Natural killer cell (primary cell): ENCODE measurements at regions of chr7 and their contacts with region 1.

Region 1: DNA sequence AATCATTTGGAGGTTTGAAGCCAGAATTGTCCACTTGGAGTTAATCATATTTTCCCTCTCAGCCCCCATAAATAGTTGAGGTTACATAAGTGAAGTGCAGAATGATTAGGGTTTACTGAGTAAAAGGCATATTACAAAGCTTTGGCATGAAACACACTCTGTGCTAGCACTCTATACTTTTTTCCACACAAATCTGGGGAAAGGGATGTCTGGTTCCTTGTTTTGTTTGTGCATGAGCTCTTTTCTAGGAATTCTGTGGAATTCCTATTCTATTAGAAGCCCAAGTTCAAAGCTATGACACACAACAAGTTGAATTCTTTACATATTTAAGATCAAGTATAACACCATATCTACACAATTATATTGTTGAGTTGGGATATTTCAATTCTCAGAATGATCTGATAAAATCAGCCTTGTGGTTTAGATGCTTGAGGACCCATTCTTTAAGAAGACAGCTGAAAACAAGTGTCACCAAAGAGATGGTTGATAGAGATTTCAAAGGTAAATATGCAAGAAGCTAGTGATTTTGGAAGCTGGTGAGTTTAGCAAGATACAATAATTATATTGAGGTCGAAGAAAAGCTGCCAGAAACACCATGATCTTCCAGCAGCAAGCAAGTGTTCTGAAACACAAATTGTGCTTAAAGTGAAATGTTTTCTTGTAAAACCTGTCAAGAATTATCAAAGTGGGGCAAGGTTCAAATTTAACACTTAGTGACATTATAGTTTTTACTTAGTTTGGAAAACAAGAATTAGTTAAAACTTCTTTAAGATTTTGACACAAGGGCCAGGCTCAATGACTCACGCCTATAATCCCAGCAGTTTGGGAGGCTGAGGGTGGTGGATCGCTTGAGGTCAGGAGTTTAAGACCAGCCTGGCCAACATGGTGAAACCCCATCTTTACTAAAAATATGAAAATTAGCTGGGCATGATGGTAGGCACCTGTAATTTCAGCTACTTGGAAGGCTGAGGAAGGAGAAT is 122.6 kb downstream of the INHBA start:
- DNase-seq: no peak
- ATAC-seq: no peak
- H3K4me3 ChIP-seq: no peak overlapping the region
- H3K4me3 Mint-ChIP-seq: no peak overlapping the region
- H3K27ac ChIP-seq: no peak overlapping the region
- H3K27ac Mint-ChIP-seq: no peak overlapping the region
- H3K4me1 ChIP-seq: no peaks in the 10 kb centered on the region
- H3K4me1 Mint-ChIP-seq: no peaks in the 10 kb centered on the region
- H3K27me3 ChIP-seq: no peaks in the 10 kb centered on the region
- H3K27me3 Mint-ChIP-seq: no peaks in the 10 kb centered on the region
- CTCF ChIP-seq: no peak

Region 2: GRCh38 chr7:41517771-41518170 is 62.5 kb before region 1 on chr7:
- intact Hi-C with region 1: loop called (anchors 10 kb)
- DNase-seq: no peak
- ATAC-seq: no peak
- H3K4me3 ChIP-seq: no peak overlapping the region
- H3K4me3 Mint-ChIP-seq: no peak overlapping the region
- H3K27ac ChIP-seq: no peak overlapping the region
- H3K27ac Mint-ChIP-seq: no peak overlapping the region
- H3K4me1 ChIP-seq: no peaks in the 10 kb centered on the region
- H3K4me1 Mint-ChIP-seq: no peaks in the 10 kb centered on the region
- H3K27me3 ChIP-seq: no peaks in the 10 kb centered on the region
- H3K27me3 Mint-ChIP-seq: no peaks in the 10 kb centered on the region
- CTCF ChIP-seq: no peak

Region 3: GRCh38 chr7:41544241-41544640 is 36.0 kb before region 1 on chr7:
- intact Hi-C with region 1: no loop called
- DNase-seq: no peak
- ATAC-seq: no peak
- H3K4me3 ChIP-seq: no peak overlapping the region
- H3K4me3 Mint-ChIP-seq: no peak overlapping the region
- H3K27ac ChIP-seq: no peak overlapping the region
- H3K27ac Mint-ChIP-seq: no peak overlapping the region
- H3K4me1 ChIP-seq: no peaks in the 10 kb centered on the region
- H3K4me1 Mint-ChIP-seq: no peaks in the 10 kb centered on the region
- H3K27me3 ChIP-seq: no peaks in the 10 kb centered on the region
- H3K27me3 Mint-ChIP-seq: no peaks in the 10 kb centered on the region
- CTCF ChIP-seq: no peak

Region 4: GRCh38 chr7:41567031-41567730 is 13.1 kb before region 1 on chr7:
- intact Hi-C with region 1: no loop called
- DNase-seq: no peak
- ATAC-seq: no peak
- H3K4me3 ChIP-seq: no peak overlapping the region
- H3K4me3 Mint-ChIP-seq: no peak overlapping the region
- H3K27ac ChIP-seq: no peak overlapping the region
- H3K27ac Mint-ChIP-seq: no peak overlapping the region
- H3K4me1 ChIP-seq: no peaks in the 10 kb centered on the region
- H3K4me1 Mint-ChIP-seq: peaks cover 0 to 9% of the 10 kb centered on the region in 2 donors
- H3K27me3 ChIP-seq: no peaks in the 10 kb centered on the region
- H3K27me3 Mint-ChIP-seq: no peaks in the 10 kb centered on the region
- CTCF ChIP-seq: no peak